ENCODE measurements at regions of chr3 and their contacts with region 1.

Region 1: GRCh38 chr3:85576091-85576690 is 617.4 kb downstream of the CADM2 start:
- DNase-seq: peak in 1 of 2 experiments; percentile 47
- H3K4me3 ChIP-seq: no peak overlapping the region
- H3K27ac ChIP-seq: no peak overlapping the region
- H3K4me1 ChIP-seq: no peaks in the 10 kb centered on the region
- H3K27me3 ChIP-seq: no peaks in the 10 kb centered on the region
- CTCF ChIP-seq: peak; percentile 88

Region 2: DNA sequence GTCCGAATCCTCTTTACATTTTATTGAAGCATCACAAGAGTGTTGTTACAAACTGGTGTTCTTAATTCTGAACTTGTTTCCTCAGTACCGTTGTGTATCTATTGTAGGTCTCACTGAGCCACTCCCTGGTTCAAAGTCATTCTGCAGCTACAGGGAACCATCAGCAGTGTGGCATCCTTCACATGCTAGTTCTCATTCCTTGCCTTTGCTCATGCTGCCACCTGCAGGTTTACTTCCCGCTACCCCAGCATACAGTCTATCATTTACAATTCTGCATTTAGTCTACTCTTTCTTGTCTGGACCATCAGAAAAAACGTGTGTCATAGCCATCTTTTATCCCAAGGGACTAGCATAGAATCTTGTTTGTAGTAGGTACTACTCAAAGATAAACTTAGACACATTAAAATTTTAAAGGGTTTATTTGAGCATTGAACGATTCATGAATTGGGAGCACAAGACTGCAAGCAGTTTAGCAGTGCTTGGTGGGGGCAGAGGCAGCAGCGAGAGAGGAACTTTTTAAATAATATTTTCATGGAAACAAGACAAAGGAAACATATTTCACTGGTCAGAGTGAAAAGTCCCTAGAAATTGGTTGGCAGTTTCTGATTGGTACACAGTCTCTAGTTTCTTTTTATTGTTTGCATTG is 215.3 kb before region 1 on chr3:
- CTCF ChIA-PET with region 1: no interaction called
- POLR2A ChIA-PET with region 1: no interaction called
- intact Hi-C with region 1: loop called (anchors 10 kb)
- DNase-seq: peak in 1 of 2 experiments; percentile 55
- H3K4me3 ChIP-seq: no peak overlapping the region
- H3K27ac ChIP-seq: no peak overlapping the region
- H3K4me1 ChIP-seq: no peaks in the 10 kb centered on the region
- H3K27me3 ChIP-seq: no peaks in the 10 kb centered on the region
- CTCF ChIP-seq: peak; percentile 77

Region 3: GRCh38 chr3:85554153-85554552 is 22.0 kb before region 1 on chr3:
- CTCF ChIA-PET with region 1: interaction called, 10 read pairs
- POLR2A ChIA-PET with region 1: no interaction called
- intact Hi-C with region 1: no loop called
- DNase-seq: no peak
- H3K4me3 ChIP-seq: no peak overlapping the region
- H3K27ac ChIP-seq: no peak overlapping the region
- H3K4me1 ChIP-seq: no peaks in the 10 kb centered on the region
- H3K27me3 ChIP-seq: no peaks in the 10 kb centered on the region
- CTCF ChIP-seq: no peak

Region 4: GRCh38 chr3:85589145-85589544 is 13.0 kb after region 1 on chr3:
- CTCF ChIA-PET with region 1: no interaction called
- POLR2A ChIA-PET with region 1: no interaction called
- intact Hi-C with region 1: no loop called
- DNase-seq: no peak
- H3K4me3 ChIP-seq: no peak overlapping the region
- H3K27ac ChIP-seq: no peak overlapping the region
- H3K4me1 ChIP-seq: no peaks in the 10 kb centered on the region
- H3K27me3 ChIP-seq: no peaks in the 10 kb centered on the region
- CTCF ChIP-seq: no peak

Region 5: DNA sequence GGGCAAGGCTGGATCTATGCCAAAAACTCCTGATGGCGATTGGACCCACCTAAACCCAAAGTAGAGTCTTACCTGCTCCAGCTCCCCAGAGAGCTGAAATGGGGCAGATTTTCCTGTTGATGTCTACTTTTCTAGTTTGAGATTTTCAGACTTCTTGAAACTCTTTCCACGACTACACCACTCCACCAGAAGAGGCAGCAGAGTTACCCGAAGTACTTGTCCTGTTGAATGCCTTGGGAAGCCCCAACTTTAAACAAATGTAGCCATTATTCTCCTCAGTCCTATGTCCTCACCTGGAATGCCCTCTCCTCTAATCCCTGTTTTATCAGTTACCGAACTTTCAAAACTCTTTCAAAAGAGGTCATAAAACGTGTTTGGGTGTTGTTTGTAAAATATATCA is 570.9 kb after region 1 on chr3:
- CTCF ChIA-PET with region 1: no interaction called
- POLR2A ChIA-PET with region 1: no interaction called
- intact Hi-C with region 1: no loop called
- DNase-seq: no peak
- H3K4me3 ChIP-seq: no peak overlapping the region
- H3K27ac ChIP-seq: no peak overlapping the region
- H3K4me1 ChIP-seq: no peaks in the 10 kb centered on the region
- H3K27me3 ChIP-seq: no peaks in the 10 kb centered on the region
- CTCF ChIP-seq: no peak; the same call in 1 of the 2 replicates

Measured in PC-9 (cell line).